CD8-positive, alpha-beta T cell (primary cell): ENCODE measurements at regions of chr2 and their contacts with region 1.

Region 1: GRCh38 chr2:212777020-212777491 is 238.5 kb upstream of the ERBB4 start:
- DNase-seq: peak in 2 of 9 experiments; percentile 37 to 49
- ATAC-seq: peak; percentile 57
- H3K4me3 ChIP-seq: no peak overlapping the region
- H3K4me3 Mint-ChIP-seq: no peak overlapping the region
- H3K27ac ChIP-seq: no peak overlapping the region
- H3K27ac Mint-ChIP-seq: no peak overlapping the region
- H3K4me1 ChIP-seq: no peaks in the 10 kb centered on the region
- H3K4me1 Mint-ChIP-seq: peaks cover 3% of the 10 kb centered on the region
- H3K27me3 ChIP-seq: no peaks in the 10 kb centered on the region
- H3K27me3 Mint-ChIP-seq: no peaks in the 10 kb centered on the region
- CTCF ChIP-seq: peak; percentile 81

Region 2: GRCh38 chr2:212686285-212686895 is 90.7 kb before region 1 on chr2:
- CTCF ChIA-PET with region 1: no interaction called
- POLR2A ChIA-PET with region 1: no interaction called
- intact Hi-C with region 1: loop called in 1 of 2 experiments (anchors 1 kb)
- DNase-seq: peak; percentile 16 to 70 (median 54)
- ATAC-seq: peak; percentile 42
- H3K4me3 ChIP-seq: no peak overlapping the region
- H3K4me3 Mint-ChIP-seq: no peak overlapping the region
- H3K27ac ChIP-seq: no peak overlapping the region
- H3K27ac Mint-ChIP-seq: no peak overlapping the region
- H3K4me1 ChIP-seq: no peaks in the 10 kb centered on the region
- H3K4me1 Mint-ChIP-seq: peaks cover 2% of the 10 kb centered on the region
- H3K27me3 ChIP-seq: no peaks in the 10 kb centered on the region
- H3K27me3 Mint-ChIP-seq: no peaks in the 10 kb centered on the region
- CTCF ChIP-seq: peak; percentile 93

Region 3: DNA sequence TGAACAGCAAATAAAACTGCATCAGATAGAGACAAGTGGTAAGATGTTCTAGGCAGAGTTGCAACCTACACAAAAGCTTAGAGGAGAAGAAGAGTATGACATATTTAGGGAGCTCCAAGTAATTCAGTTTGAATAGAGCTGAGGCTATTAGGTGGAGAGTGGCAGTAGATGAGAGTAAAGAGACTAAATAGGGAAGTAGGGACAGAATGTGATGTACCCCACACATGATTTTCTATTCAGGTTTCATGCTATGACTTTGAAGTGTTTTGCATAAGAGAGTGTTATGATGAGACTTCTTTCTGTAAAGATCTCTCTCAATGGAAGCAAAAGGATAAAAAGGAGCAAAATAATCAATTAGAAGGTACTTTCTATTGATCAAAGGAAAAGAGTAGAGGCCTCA is 31.7 kb before region 1 on chr2:
- CTCF ChIA-PET with region 1: no interaction called
- POLR2A ChIA-PET with region 1: no interaction called
- intact Hi-C with region 1: no loop called
- DNase-seq: no peak
- ATAC-seq: no peak
- H3K4me3 ChIP-seq: no peak overlapping the region
- H3K4me3 Mint-ChIP-seq: no peak overlapping the region
- H3K27ac ChIP-seq: no peak overlapping the region
- H3K27ac Mint-ChIP-seq: no peak overlapping the region
- H3K4me1 ChIP-seq: no peaks in the 10 kb centered on the region
- H3K4me1 Mint-ChIP-seq: no peaks in the 10 kb centered on the region
- H3K27me3 ChIP-seq: no peaks in the 10 kb centered on the region
- H3K27me3 Mint-ChIP-seq: peaks cover 1% of the 10 kb centered on the region
- CTCF ChIP-seq: no peak

Region 4: GRCh38 chr2:213238753-213239495 is 461.9 kb after region 1 on chr2:
- CTCF ChIA-PET with region 1: no interaction called
- POLR2A ChIA-PET with region 1: no interaction called
- intact Hi-C with region 1: loop called in 1 of 2 experiments (anchors 5 kb)
- DNase-seq: peak in 2 of 9 experiments; percentile 11 to 56
- ATAC-seq: peak; percentile 64
- H3K4me3 ChIP-seq: no peak overlapping the region
- H3K4me3 Mint-ChIP-seq: peak overlapping the region; percentile 65
- H3K27ac ChIP-seq: peak overlapping the region in 1 of 2 experiments; percentile 39
- H3K27ac Mint-ChIP-seq: peak overlapping the region; percentile 76
- H3K4me1 ChIP-seq: no peaks in the 10 kb centered on the region
- H3K4me1 Mint-ChIP-seq: peaks cover 43% of the 10 kb centered on the region
- H3K27me3 ChIP-seq: no peaks in the 10 kb centered on the region
- H3K27me3 Mint-ChIP-seq: peaks cover 8% of the 10 kb centered on the region
- CTCF ChIP-seq: no peak